HCT116 (cell line): ENCODE measurements at regions of chr2 and their contacts with region 1.

Region 1: GRCh38 chr2:84946204-84947009 is 24.6 kb upstream of the KCMF1 start:
- DNase-seq: peak; percentile 96
- ATAC-seq: peak; percentile 94
- H3K4me3 ChIP-seq: peak overlapping the region; percentile 35 to 54
- H3K27ac ChIP-seq: peak overlapping the region; percentile 99
- H3K4me1 ChIP-seq: peaks cover 30 to 62% of the 10 kb centered on the region in 2 experiments
- H3K27me3 ChIP-seq: no peaks in the 10 kb centered on the region
- CTCF ChIP-seq: no peak
- POLR2A ChIP-seq: peak; percentile 26
- RAD21 ChIP-seq: no peak

Region 2: DNA sequence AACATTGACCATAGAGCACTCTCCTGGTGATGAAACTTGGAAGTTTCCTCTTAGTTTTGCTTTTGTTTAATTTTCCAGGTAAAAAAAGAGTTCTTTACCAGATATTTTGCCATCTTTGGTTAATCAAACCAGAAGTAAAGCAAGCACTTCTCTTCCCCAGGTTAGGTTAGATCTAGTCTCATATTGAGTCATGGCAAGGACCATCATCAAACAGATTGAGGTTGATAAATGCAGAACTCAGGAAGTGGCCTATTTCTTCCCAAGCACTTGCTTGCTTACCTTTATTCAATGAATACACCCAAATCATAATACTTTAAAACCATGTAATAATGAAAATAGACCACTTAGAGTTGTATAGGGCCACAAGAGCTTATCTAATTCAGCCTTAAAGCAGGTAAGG is 406.7 kb before region 1 on chr2:
- CTCF ChIA-PET with region 1: no interaction called
- POLR2A ChIA-PET with region 1: no interaction called
- RAD21 ChIA-PET with region 1: no interaction called
- intact Hi-C with region 1: no loop called
- DNase-seq: no peak
- ATAC-seq: no peak
- H3K4me3 ChIP-seq: no peak overlapping the region
- H3K27ac ChIP-seq: no peak overlapping the region
- H3K4me1 ChIP-seq: no peaks in the 10 kb centered on the region
- H3K27me3 ChIP-seq: no peaks in the 10 kb centered on the region
- CTCF ChIP-seq: no peak
- POLR2A ChIP-seq: no peak
- RAD21 ChIP-seq: no peak

Region 3: DNA sequence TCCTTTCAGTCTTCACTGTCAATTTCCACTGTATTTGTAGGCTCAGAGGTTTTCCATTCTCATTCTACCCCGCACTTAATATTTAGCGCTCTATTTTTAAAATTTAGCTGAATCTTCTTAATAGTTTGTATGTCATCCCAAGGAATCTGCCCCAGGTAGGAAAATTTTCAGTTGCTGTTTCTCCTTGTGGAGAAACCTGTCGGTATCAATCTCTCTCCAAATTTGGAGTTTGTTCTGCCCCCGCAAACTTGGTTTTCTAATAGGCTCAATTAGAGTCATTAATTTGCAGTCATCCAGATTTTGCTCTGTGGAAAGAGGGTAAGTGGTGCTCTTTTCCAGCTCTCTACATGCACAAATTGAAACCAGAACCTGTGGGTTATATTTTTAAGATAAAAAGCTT is 342.5 kb before region 1 on chr2:
- CTCF ChIA-PET with region 1: no interaction called
- POLR2A ChIA-PET with region 1: no interaction called
- RAD21 ChIA-PET with region 1: no interaction called
- intact Hi-C with region 1: no loop called
- DNase-seq: no peak
- ATAC-seq: no peak
- H3K4me3 ChIP-seq: no peak overlapping the region
- H3K27ac ChIP-seq: no peak overlapping the region
- H3K4me1 ChIP-seq: no peaks in the 10 kb centered on the region
- H3K27me3 ChIP-seq: no peaks in the 10 kb centered on the region
- CTCF ChIP-seq: no peak
- POLR2A ChIP-seq: no peak
- RAD21 ChIP-seq: no peak

Region 4: DNA sequence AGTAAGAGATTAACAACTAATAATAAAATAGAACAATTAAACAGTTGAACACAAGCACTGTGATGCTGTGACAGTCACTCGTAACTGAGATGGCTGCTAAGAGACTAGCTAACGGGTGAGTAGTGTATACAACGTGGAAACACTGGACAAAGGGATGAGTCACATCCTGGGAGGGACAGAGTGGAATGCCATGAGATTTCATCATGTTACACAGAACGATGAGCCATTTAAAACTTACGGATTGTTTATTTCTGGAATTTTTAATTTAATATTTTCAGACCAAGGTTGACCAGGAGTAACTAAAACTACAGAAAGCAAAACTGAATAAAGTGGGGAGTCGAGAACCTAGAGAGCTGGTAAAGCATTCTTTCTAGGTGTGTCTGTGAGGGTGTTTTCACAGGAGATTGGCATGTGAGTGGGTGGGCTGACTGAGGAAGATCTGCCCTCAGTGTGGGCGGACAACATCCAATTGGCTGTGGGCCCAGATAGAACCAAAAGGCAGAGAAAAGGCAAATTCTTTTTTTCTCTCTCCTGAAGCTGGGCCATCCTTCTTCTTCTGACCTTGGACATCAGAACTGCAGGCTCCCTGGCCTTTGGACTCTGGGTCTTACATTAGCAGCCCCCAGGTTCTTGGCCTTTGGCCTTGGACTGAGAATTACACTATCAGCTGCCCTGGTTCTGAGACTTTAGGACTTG is 26.4 kb before region 1 on chr2:
- CTCF ChIA-PET with region 1: interaction called, 39 read pairs
- POLR2A ChIA-PET with region 1: interaction called, 30 read pairs
- RAD21 ChIA-PET with region 1: no interaction called
- intact Hi-C with region 1: no loop called
- DNase-seq: peak; percentile 94
- ATAC-seq: peak; percentile 91
- H3K4me3 ChIP-seq: peak overlapping the region; percentile 12 to 41
- H3K27ac ChIP-seq: peak overlapping the region; percentile 87
- H3K4me1 ChIP-seq: peaks cover 23 to 45% of the 10 kb centered on the region in 2 experiments
- H3K27me3 ChIP-seq: no peaks in the 10 kb centered on the region
- CTCF ChIP-seq: no peak
- POLR2A ChIP-seq: peak; percentile 66
- RAD21 ChIP-seq: no peak

Region 5: DNA sequence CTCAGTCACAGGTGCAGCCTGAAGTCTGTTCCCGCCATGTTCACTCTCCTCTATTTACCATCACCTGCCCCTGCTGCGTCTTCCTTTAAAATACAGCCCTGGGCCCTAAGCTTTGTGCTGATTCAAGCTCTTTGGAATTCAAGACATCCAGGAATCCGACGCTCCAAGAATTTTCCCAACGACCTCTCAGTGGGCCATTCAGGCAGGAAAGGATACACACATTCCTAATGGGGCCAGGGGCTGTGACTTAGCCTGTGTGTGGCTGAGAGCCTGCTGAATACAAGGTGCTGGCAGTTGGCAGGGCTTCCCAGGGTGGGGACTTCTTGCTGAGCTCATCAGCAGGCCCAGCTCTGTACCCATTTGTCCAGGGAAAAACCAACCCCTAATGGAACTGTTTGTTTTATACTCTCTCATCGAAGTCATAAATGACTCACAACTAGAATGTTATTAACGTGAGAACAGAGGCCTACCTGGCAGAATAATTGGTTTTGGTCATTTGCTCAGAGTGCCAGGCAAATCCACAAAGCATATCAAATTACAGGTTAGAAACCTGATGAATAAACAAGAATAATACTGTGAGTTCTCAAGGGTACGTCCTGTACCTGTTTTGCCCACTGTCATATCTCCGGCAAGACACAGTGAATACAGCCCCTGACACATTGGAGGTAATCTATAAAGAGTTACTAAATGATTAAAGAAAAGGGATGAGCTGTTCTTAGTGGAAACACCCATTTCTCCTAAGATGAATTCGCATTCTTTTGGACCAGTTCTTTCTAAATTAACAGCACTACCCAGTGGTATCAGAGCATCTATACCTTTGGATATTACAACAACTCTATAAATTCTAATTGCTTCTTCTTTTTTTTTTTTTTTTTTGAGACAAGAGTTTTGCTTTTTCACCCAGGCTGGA is 12.0 kb after region 1 on chr2:
- CTCF ChIA-PET with region 1: interaction called, 8 read pairs
- POLR2A ChIA-PET with region 1: interaction called, 67 read pairs
- RAD21 ChIA-PET with region 1: interaction called, 3 to 8 read pairs
- intact Hi-C with region 1: loop called (anchors 1 kb)
- DNase-seq: peak; percentile 93
- ATAC-seq: peak; percentile 87
- H3K4me3 ChIP-seq: peak overlapping the region; percentile 11 to 45; a peak in 3 of 4 replicates
- H3K27ac ChIP-seq: peak overlapping the region; percentile 83
- H3K4me1 ChIP-seq: peaks cover 42 to 61% of the 10 kb centered on the region in 2 experiments
- H3K27me3 ChIP-seq: no peaks in the 10 kb centered on the region
- CTCF ChIP-seq: no peak
- POLR2A ChIP-seq: no peak
- RAD21 ChIP-seq: peak; percentile 26; the same call in 1 of the 2 replicates